ENCODE measurements at regions of chr19 and their contacts with region 1.

Region 1: GRCh38 chr19:41641879-41642485 is 15.1 kb upstream of the CEACAM4 start:
- DNase-seq: peak; percentile 73
- ATAC-seq: peak; percentile 65
- H3K4me3 ChIP-seq: no peak overlapping the region
- H3K4me3 Mint-ChIP-seq: no peak overlapping the region
- H3K27ac ChIP-seq: no peak overlapping the region
- H3K27ac Mint-ChIP-seq: no peak overlapping the region
- H3K4me1 ChIP-seq: no peaks in the 10 kb centered on the region
- H3K4me1 Mint-ChIP-seq: no peaks in the 10 kb centered on the region
- H3K27me3 ChIP-seq: peaks cover 0 to 21% (median 5%) of the 10 kb centered on the region in 4 experiments
- H3K27me3 Mint-ChIP-seq: peaks cover 40% of the 10 kb centered on the region
- CTCF ChIP-seq: peak; percentile 98

Region 2: DNA sequence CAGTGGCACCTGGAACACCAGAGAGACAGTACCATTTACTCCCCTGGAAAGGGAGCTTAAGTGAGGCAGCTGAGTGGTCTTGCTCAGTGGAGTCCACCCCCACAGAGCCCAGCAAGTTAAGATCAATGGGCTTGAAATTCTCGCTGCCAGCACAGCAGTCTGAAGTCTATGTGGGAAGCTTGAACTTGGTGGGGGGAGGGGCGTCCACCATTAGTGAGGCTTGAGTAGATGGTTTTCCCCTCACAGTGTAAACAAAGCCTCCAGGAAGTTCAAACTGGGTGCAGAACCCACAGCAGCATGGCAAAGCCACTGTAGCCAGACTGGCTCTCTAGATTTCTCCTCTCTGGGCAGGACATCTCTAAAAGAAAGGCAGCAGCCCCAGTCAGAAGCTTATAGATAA is 15.2 kb after region 1 on chr19:
- CTCF ChIA-PET with region 1: interaction called, 60 read pairs
- POLR2A ChIA-PET with region 1: no interaction called
- intact Hi-C with region 1: no loop called
- DNase-seq: no peak
- ATAC-seq: no peak
- H3K4me3 ChIP-seq: no peak overlapping the region
- H3K4me3 Mint-ChIP-seq: no peak overlapping the region
- H3K27ac ChIP-seq: no peak overlapping the region
- H3K27ac Mint-ChIP-seq: no peak overlapping the region
- H3K4me1 ChIP-seq: no peaks in the 10 kb centered on the region
- H3K4me1 Mint-ChIP-seq: no peaks in the 10 kb centered on the region
- H3K27me3 ChIP-seq: peaks cover 0 to 11% (median 5%) of the 10 kb centered on the region in 4 experiments
- H3K27me3 Mint-ChIP-seq: peaks cover 73% of the 10 kb centered on the region
- CTCF ChIP-seq: no peak

Region 3: GRCh38 chr19:41746593-41747227 is 104.7 kb after region 1 on chr19:
- CTCF ChIA-PET with region 1: no interaction called
- POLR2A ChIA-PET with region 1: no interaction called
- intact Hi-C with region 1: loop called (anchors 5 kb)
- DNase-seq: peak; percentile 54
- ATAC-seq: peak; percentile 53
- H3K4me3 ChIP-seq: no peak overlapping the region
- H3K4me3 Mint-ChIP-seq: no peak overlapping the region
- H3K27ac ChIP-seq: no peak overlapping the region
- H3K27ac Mint-ChIP-seq: no peak overlapping the region
- H3K4me1 ChIP-seq: peaks cover 10 to 20% of the 10 kb centered on the region in 2 donors
- H3K4me1 Mint-ChIP-seq: peaks cover 11% of the 10 kb centered on the region
- H3K27me3 ChIP-seq: peaks cover 0 to 22% (median 5%) of the 10 kb centered on the region in 4 experiments
- H3K27me3 Mint-ChIP-seq: peaks cover 27% of the 10 kb centered on the region
- CTCF ChIP-seq: peak; percentile 46

Measured in B cell (primary cell).